ENCODE measurements at regions of chr10 and their contacts with region 1.

Region 1: DNA sequence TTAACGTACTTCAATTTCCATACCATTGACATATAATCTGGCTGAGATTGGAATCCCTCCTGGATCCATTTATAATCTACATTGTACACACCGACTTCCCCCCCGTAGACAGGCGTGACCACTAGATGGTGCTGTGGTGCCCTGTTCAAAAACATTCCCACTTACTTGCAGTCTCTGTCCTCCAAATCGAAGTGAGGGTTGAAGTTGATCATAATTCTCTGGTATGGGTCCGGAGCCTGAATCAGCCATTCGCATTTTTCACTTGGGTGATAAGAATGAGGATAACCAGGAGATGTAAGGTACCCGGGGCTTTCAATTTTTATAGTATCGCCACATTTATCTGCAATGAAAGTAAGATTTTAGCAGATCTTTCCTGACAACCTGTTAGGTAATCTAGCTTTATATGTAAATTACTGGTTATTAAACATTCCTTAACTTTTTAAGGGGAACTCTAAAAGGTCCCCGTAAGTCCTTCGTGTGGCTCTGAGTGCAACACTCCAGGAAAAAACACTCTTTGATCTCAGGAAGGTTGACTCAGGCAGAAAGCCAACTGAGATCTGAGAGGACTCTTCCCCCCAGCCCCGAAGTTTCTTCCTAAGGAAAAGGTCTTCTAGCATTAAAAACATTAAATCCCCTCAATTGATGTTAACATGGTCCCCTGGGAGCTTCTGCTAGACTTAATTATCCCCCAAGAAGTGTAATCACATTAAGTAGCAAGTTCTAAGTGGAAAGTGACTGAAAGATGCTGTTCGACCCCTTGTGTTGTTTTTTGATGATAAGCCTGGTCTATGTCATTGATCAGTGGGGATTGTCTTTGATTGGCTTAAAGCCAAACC is 3.7 kb downstream of the NRP1 start:
- DNase-seq: peak; percentile 42 to 74 (median 57)
- ATAC-seq: peak; percentile 83
- H3K4me3 ChIP-seq: no peak overlapping the region
- H3K4me3 Mint-ChIP-seq: peak overlapping the region in 4 of 10 donors; percentile 2 to 39 (median 30)
- H3K27ac ChIP-seq: no peak overlapping the region
- H3K27ac Mint-ChIP-seq: no peak overlapping the region
- H3K4me1 ChIP-seq: peaks cover 5 to 12% of the 10 kb centered on the region in 2 donors
- H3K4me1 Mint-ChIP-seq: peaks cover 5 to 29% (median 18%) of the 10 kb centered on the region in 7 donors
- H3K27me3 ChIP-seq: peaks cover 15 to 19% of the 10 kb centered on the region in 2 donors
- H3K27me3 Mint-ChIP-seq: peaks cover 57 to 73% (median 71%) of the 10 kb centered on the region in 5 donors

Region 2: DNA sequence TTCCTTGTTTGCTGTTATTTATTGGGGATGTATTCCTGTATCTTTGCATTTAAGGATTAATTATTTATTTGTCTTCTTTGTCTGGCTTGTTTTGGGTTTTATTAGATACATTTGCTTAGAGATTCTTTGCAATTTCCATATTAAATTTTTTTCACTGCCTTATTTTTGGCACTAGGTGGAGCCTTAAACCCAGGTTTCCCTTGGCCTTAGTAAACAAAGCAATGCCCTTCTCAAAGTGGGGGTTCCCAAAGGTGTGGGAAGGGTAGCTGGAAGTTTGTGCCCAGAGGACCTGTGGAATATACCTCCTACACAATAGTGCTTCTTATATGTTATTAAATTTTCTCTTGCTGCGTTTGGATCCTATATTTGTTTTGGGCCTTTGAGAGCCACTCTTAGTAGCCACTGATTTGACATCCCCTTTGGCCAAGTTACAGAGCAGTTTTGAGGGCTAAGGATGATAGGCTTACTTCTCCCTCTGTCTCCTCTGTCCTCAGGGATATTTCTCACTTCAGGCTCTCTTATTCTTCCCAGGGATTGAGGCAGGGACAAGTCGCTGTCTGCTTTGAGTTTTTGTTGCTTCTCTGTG is 535.1 kb before region 1 on chr10:
- CTCF ChIA-PET with region 1: no interaction called
- POLR2A ChIA-PET with region 1: no interaction called
- intact Hi-C with region 1: loop called in 1 of 2 experiments (anchors 1 kb)
- DNase-seq: peak in 5 of 9 donors; percentile 12 to 37 (median 22)
- ATAC-seq: peak; percentile 54
- H3K4me3 ChIP-seq: no peak overlapping the region
- H3K4me3 Mint-ChIP-seq: no peak overlapping the region
- H3K27ac ChIP-seq: no peak overlapping the region
- H3K27ac Mint-ChIP-seq: no peak overlapping the region
- H3K4me1 ChIP-seq: peaks cover 0 to 4% of the 10 kb centered on the region in 2 donors
- H3K4me1 Mint-ChIP-seq: no peaks in the 10 kb centered on the region
- H3K27me3 ChIP-seq: no peaks in the 10 kb centered on the region
- H3K27me3 Mint-ChIP-seq: peaks cover 0 to 3% (median 0%) of the 10 kb centered on the region in 5 donors

Region 3: GRCh38 chr10:33248638-33249037 is 82.1 kb before region 1 on chr10:
- CTCF ChIA-PET with region 1: interaction called, 3 read pairs
- POLR2A ChIA-PET with region 1: no interaction called
- intact Hi-C with region 1: loop called (anchors 1 to 5 kb)
- DNase-seq: peak in 8 of 9 donors; percentile 38 to 86 (median 76)
- ATAC-seq: peak; percentile 97
- H3K4me3 ChIP-seq: peak overlapping the region; percentile 21
- H3K4me3 Mint-ChIP-seq: peak overlapping the region; percentile 60 to 89 (median 78)
- H3K27ac ChIP-seq: no peak overlapping the region
- H3K27ac Mint-ChIP-seq: peak overlapping the region; percentile 70 to 94 (median 87)
- H3K4me1 ChIP-seq: peaks cover 21 to 29% of the 10 kb centered on the region in 2 donors
- H3K4me1 Mint-ChIP-seq: peaks cover 28 to 80% (median 64%) of the 10 kb centered on the region in 7 donors
- H3K27me3 ChIP-seq: no peaks in the 10 kb centered on the region
- H3K27me3 Mint-ChIP-seq: peaks cover 0 to 43% (median 0%) of the 10 kb centered on the region in 5 donors

Region 4: DNA sequence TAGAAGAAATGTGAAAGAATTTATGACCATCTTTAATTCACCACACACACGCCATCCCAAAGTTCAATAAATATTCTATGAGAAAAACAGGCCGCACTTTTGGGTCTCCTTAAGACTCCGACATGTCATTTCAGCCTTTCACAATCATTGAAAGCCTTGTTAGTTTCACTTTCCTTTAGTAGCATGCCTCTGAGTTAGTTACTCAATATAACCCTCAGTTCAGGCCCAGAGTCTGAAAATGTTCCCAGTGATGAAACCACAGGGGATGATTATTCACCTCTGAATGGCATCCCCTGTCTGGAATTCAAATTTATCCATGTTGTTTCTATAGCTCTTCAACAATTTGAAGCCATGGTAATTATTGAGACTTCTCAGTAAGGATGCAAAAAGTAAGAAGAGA is 281.8 kb after region 1 on chr10:
- CTCF ChIA-PET with region 1: no interaction called
- POLR2A ChIA-PET with region 1: no interaction called
- intact Hi-C with region 1: no loop called
- DNase-seq: no peak
- ATAC-seq: peak; percentile 50
- H3K4me3 ChIP-seq: no peak overlapping the region
- H3K4me3 Mint-ChIP-seq: no peak overlapping the region
- H3K27ac ChIP-seq: no peak overlapping the region
- H3K27ac Mint-ChIP-seq: no peak overlapping the region
- H3K4me1 ChIP-seq: no peaks in the 10 kb centered on the region
- H3K4me1 Mint-ChIP-seq: no peaks in the 10 kb centered on the region
- H3K27me3 ChIP-seq: no peaks in the 10 kb centered on the region
- H3K27me3 Mint-ChIP-seq: peaks cover 0 to 24% (median 6%) of the 10 kb centered on the region in 5 donors

Region 5: GRCh38 chr10:34637418-34637911 is 1306.7 kb after region 1 on chr10:
- CTCF ChIA-PET with region 1: no interaction called
- POLR2A ChIA-PET with region 1: no interaction called
- intact Hi-C with region 1: loop called (anchors 1 kb)
- DNase-seq: peak; percentile 20 to 70 (median 53)
- ATAC-seq: peak; percentile 77
- H3K4me3 ChIP-seq: no peak overlapping the region
- H3K4me3 Mint-ChIP-seq: peak overlapping the region in 8 of 10 donors; percentile 0 to 46 (median 18)
- H3K27ac ChIP-seq: no peak overlapping the region
- H3K27ac Mint-ChIP-seq: peak overlapping the region in 1 of 9 donors; percentile 56
- H3K4me1 ChIP-seq: no peaks in the 10 kb centered on the region
- H3K4me1 Mint-ChIP-seq: peaks cover 7 to 18% (median 13%) of the 10 kb centered on the region in 7 donors
- H3K27me3 ChIP-seq: no peaks in the 10 kb centered on the region
- H3K27me3 Mint-ChIP-seq: peaks cover 0 to 13% (median 9%) of the 10 kb centered on the region in 5 donors

Measured in naive thymus-derived CD4-positive, alpha-beta T cell (primary cell).